ENCODE measurements at regions of chr6 and their contacts with region 1.

Region 1: GRCh38 chr6:144897441-144897921 is 612.3 kb downstream of the UTRN start:
- DNase-seq: peak; percentile 61 to 95
- H3K4me3 ChIP-seq: peak overlapping the region; percentile 27; the same call in 1 of the 2 replicates
- H3K27ac ChIP-seq: peak overlapping the region; percentile 96
- H3K4me1 ChIP-seq: peaks cover 42% of the 10 kb centered on the region
- H3K27me3 ChIP-seq: no peaks in the 10 kb centered on the region
- CTCF ChIP-seq: no peak

Region 2: GRCh38 chr6:144879436-144879835 is 18.0 kb before region 1 on chr6:
- CTCF ChIA-PET with region 1: no interaction called
- POLR2A ChIA-PET with region 1: no interaction called
- intact Hi-C with region 1: no loop called
- DNase-seq: peak in 1 of 2 experiments; percentile 80
- H3K4me3 ChIP-seq: no peak overlapping the region
- H3K27ac ChIP-seq: peak overlapping the region; percentile 65
- H3K4me1 ChIP-seq: peaks cover 9% of the 10 kb centered on the region; the same call in 1 of the 2 replicates
- H3K27me3 ChIP-seq: no peaks in the 10 kb centered on the region
- CTCF ChIP-seq: no peak

Region 3: DNA sequence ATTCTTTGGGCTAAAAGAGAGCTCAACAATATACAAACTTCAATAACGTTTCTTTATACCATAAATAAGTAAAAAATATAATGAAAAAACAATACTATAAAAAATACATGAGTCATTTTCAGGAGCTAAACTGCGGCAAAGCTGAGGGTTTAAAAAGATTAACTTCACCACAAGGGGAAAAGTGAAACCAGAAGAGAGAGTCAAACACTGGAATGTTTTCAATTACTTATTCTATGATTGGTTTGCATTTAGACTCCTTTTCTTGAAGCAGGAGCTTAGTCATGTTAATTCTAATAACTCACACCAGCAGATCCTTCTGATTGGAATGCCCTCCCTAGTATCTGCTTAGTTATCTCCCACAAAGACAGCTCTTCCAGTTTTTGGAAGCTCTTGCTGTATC is 15.0 kb after region 1 on chr6:
- CTCF ChIA-PET with region 1: no interaction called
- POLR2A ChIA-PET with region 1: no interaction called
- intact Hi-C with region 1: loop called (anchors 1 kb)
- DNase-seq: no peak
- H3K4me3 ChIP-seq: no peak overlapping the region
- H3K27ac ChIP-seq: 0 out of 2 replicates have a peak overlapping the region, but pooled peaks have one; percentile 16
- H3K4me1 ChIP-seq: peaks cover 22% of the 10 kb centered on the region
- H3K27me3 ChIP-seq: no peaks in the 10 kb centered on the region
- CTCF ChIP-seq: no peak